ENCODE measurements at regions of chr13 and their contacts with region 1.

Region 1: DNA sequence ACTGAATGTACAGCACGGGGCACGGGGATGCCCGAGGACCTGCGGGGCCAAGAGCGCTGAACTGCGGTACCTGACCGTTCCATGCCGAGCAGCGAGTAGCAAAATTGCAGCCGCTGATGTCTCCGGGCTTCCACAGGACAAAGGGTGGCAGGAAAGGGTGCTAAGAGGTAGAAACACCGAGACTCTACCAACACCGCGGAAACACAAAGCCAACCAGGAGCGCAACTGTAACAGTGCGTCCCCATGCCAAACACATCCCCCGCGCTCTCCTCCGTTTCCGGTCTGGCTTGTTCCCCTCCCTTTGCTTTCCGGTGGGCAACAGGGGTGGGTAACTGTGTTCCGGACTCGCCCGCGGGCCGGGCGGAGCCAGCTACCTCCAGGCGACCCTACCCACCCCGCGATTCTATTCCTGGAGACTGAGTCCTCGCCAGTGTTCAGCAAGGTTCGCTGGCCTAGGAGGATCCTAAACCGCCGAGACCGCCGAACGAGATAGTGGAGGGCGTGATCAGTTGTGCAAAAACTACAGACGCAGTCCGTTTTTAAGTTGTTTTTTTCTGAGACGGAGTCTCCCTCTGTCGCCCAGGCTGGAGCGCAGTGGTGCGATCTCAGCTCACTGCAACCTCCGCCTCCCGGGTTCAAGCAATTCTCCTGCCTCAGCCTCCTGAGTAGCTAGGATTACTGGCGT is 34.9 kb upstream of the NEK3 start:
- DNase-seq: no peak
- ATAC-seq: peak; percentile 87
- H3K4me3 ChIP-seq: peak overlapping the region; percentile 90 to 94
- H3K27ac ChIP-seq: peak overlapping the region; percentile 91
- H3K4me1 ChIP-seq: peaks cover 5% of the 10 kb centered on the region; the same call in 1 of the 2 replicates
- H3K27me3 ChIP-seq: no peaks in the 10 kb centered on the region
- CTCF ChIP-seq: no peak

Region 2: GRCh38 chr13:51814825-51815650 is 379.3 kb before region 1 on chr13:
- CTCF ChIA-PET with region 1: interaction called, 13 read pairs
- POLR2A ChIA-PET with region 1: no interaction called
- in situ Hi-C with region 1: no loop called
- intact Hi-C with region 1: no loop called
- DNase-seq: no peak
- ATAC-seq: peak; percentile 92
- H3K4me3 ChIP-seq: peak overlapping the region; percentile 12 to 43
- H3K27ac ChIP-seq: no peak overlapping the region
- H3K4me1 ChIP-seq: no peaks in the 10 kb centered on the region
- H3K27me3 ChIP-seq: no peaks in the 10 kb centered on the region
- CTCF ChIP-seq: peak; percentile 82

Region 3: GRCh38 chr13:52001120-52001731 is 193.1 kb before region 1 on chr13:
- CTCF ChIA-PET with region 1: no interaction called
- POLR2A ChIA-PET with region 1: no interaction called
- in situ Hi-C with region 1: no loop called
- intact Hi-C with region 1: loop called (anchors 10 kb)
- DNase-seq: no peak
- ATAC-seq: no peak
- H3K4me3 ChIP-seq: no peak overlapping the region
- H3K27ac ChIP-seq: no peak overlapping the region
- H3K4me1 ChIP-seq: peaks cover 42% of the 10 kb centered on the region
- H3K27me3 ChIP-seq: no peaks in the 10 kb centered on the region
- CTCF ChIP-seq: peak; percentile 70

Region 4: GRCh38 chr13:52141297-52141696 is 53.0 kb before region 1 on chr13:
- CTCF ChIA-PET with region 1: no interaction called
- POLR2A ChIA-PET with region 1: no interaction called
- in situ Hi-C with region 1: no loop called
- intact Hi-C with region 1: no loop called
- DNase-seq: no peak
- ATAC-seq: no peak
- H3K4me3 ChIP-seq: no peak overlapping the region
- H3K27ac ChIP-seq: no peak overlapping the region
- H3K4me1 ChIP-seq: no peaks in the 10 kb centered on the region
- H3K27me3 ChIP-seq: no peaks in the 10 kb centered on the region
- CTCF ChIP-seq: no peak

Region 5: GRCh38 chr13:52454820-52455676 is 260.7 kb after region 1 on chr13 and contains the start of gene CKAP2:
- CTCF ChIA-PET with region 1: no interaction called
- POLR2A ChIA-PET with region 1: no interaction called
- in situ Hi-C with region 1: no loop called
- intact Hi-C with region 1: no loop called
- DNase-seq: peak; percentile 78
- ATAC-seq: peak; percentile 94
- H3K4me3 ChIP-seq: peak within 1 kb of the TSS; percentile 82 to 90
- H3K27ac ChIP-seq: peak within 1 kb of the TSS; percentile 93
- H3K4me1 ChIP-seq: peaks cover 21% of the 10 kb centered on the region; the same call in 1 of the 2 replicates
- H3K27me3 ChIP-seq: no peaks in the 10 kb centered on the region
- CTCF ChIP-seq: no peak
- total RNA-seq, gene CKAP2: 51.1 TPM

Measured in Panc1 (cell line).